ENCODE measurements at regions of chr9 and their contacts with region 1.

Region 1: GRCh38 chr9:91775011-91775707 is 174.9 kb downstream of the ROR2 start:
- DNase-seq: peak; percentile 62 to 77 (median 72)
- ATAC-seq: peak; percentile 83
- H3K4me3 ChIP-seq: no peak overlapping the region
- H3K4me1 ChIP-seq: peaks cover 14% of the 10 kb centered on the region
- CTCF ChIP-seq: peak; percentile 50

Region 2: DNA sequence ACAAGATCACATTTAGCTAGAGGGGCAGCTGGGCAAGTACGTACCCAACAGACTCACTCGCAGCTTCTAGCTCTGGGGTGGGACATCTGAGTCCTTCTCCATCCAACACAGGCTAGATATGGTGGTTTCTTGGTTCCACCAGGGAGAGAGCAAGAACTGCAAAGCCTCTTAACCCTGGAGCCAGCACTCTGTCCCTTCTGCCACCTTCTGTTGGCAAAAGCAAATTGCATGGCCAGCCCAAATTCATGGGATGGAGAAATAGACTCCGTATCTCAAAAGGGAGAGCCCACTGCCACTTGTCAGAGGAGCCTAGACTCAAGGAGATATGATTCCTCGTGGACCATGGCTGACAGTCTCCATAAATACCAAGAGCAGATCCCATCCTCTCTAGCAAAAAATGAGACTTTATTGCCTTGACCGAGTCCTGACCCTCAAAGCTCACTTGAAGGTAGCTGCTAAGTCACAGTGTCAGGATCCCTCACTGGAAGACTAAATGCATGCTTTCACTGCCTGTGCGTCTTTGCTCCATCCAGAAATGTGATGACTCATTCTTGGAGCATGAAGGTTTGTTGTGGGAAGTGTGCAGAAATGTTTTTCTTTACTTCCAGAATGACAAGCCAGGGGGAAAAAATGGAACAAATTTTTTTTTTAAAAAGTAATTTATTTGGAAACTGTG is 203.7 kb after region 1 on chr9:
- intact Hi-C with region 1: loop called in 1 of 2 experiments (anchors 10 kb)
- DNase-seq: peak in 1 of 3 donors; percentile 17
- ATAC-seq: peak; percentile 14
- H3K4me3 ChIP-seq: no peak overlapping the region
- H3K4me1 ChIP-seq: no peaks in the 10 kb centered on the region
- CTCF ChIP-seq: no peak

Region 3: GRCh38 chr9:92019658-92020057 is 244.5 kb after region 1 on chr9:
- intact Hi-C with region 1: no loop called
- DNase-seq: no peak
- ATAC-seq: no peak
- H3K4me3 ChIP-seq: no peak overlapping the region
- H3K4me1 ChIP-seq: no peaks in the 10 kb centered on the region
- CTCF ChIP-seq: no peak

Region 4: DNA sequence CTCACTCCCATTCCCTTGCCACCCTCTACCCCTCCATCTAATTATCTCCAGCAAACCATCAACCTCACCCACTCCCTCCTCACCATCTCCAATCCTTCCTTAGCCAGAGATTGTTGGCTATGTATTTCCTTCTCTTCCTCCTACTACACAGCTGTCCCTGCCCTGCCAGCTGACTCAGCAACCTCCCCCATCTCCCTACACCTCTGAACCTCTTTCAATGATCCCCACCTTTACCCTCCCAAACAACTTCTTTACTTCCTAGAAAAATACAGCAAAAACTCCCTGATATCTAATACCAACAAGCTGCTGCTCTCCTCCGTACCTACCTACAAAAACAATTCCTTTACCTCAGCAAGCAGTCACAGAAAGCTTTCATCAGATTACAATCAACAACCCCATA is 302.7 kb after region 1 on chr9:
- intact Hi-C with region 1: no loop called
- DNase-seq: no peak
- ATAC-seq: no peak
- H3K4me3 ChIP-seq: no peak overlapping the region
- H3K4me1 ChIP-seq: no peaks in the 10 kb centered on the region
- CTCF ChIP-seq: no peak